ENCODE measurements at regions of chr3 and their contacts with region 1.

Region 1: GRCh38 chr3:56801662-56802377 is at the start of gene ARHGEF3:
- DNase-seq: peak; percentile 85
- H3K4me3 Mint-ChIP-seq: peak within 1 kb of the TSS; percentile 78
- H3K27ac Mint-ChIP-seq: peak within 1 kb of the TSS; percentile 0
- H3K4me1 Mint-ChIP-seq: peaks cover 24% of the 10 kb centered on the region
- H3K27me3 Mint-ChIP-seq: no peaks in the 10 kb centered on the region
- CTCF ChIP-seq: peak; percentile 47
- total RNA-seq, gene ARHGEF3: 10.6 and 13.1 TPM in 2 replicates

Region 2: GRCh38 chr3:56702490-56703315 is 99.1 kb before region 1 on chr3:
- CTCF ChIA-PET with region 1: interaction called, 197 read pairs
- POLR2A ChIA-PET with region 1: interaction called, 22 read pairs
- intact Hi-C with region 1: loop called (anchors 1 kb)
- DNase-seq: peak; percentile 77
- H3K4me3 Mint-ChIP-seq: no peak overlapping the region
- H3K27ac Mint-ChIP-seq: no peak overlapping the region
- H3K4me1 Mint-ChIP-seq: no peaks in the 10 kb centered on the region
- H3K27me3 Mint-ChIP-seq: no peaks in the 10 kb centered on the region
- CTCF ChIP-seq: peak; percentile 75

Region 3: DNA sequence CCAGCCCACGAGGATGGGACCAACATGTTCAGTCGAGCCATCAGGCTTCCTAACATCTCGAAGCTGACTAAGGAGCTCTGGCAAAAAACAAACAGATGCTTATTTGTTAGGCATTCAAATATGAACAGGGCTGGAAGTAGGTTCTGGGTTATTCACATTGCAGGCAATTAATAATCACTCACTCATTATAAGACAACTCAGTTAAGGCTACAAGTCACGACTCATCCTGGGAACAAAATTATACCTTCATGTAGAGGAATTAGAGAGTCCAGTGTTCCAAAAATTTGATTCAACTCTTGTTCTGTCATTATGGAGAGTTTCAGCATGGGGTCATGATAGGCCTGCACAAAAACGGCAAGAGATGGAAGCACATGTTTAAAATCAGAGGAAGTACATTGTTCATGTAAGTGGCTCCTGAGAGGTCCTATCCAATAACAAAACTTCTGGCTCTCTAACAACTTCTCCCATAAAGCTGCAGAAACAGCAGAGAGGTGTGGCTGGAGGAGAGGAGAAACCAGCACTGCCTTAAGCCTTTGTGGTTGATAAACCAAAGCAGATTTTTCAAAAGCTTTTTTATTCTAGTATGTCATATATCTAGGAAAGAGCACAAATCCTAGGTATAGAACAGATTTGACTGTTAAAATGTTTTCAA is 50.6 kb before region 1 on chr3:
- CTCF ChIA-PET with region 1: interaction called, 22 read pairs
- POLR2A ChIA-PET with region 1: interaction called, 10 read pairs
- intact Hi-C with region 1: no loop called
- DNase-seq: no peak
- H3K4me3 Mint-ChIP-seq: no peak overlapping the region
- H3K27ac Mint-ChIP-seq: no peak overlapping the region
- H3K4me1 Mint-ChIP-seq: peaks cover 11% of the 10 kb centered on the region
- H3K27me3 Mint-ChIP-seq: no peaks in the 10 kb centered on the region
- CTCF ChIP-seq: no peak

Region 4: GRCh38 chr3:56812754-56813650 is 11.2 kb after region 1 on chr3:
- CTCF ChIA-PET with region 1: interaction called, 37 read pairs
- POLR2A ChIA-PET with region 1: interaction called, 5 read pairs
- intact Hi-C with region 1: no loop called
- DNase-seq: peak; percentile 54
- H3K4me3 Mint-ChIP-seq: no peak overlapping the region
- H3K27ac Mint-ChIP-seq: peak overlapping the region; percentile 69
- H3K4me1 Mint-ChIP-seq: peaks cover 11% of the 10 kb centered on the region
- H3K27me3 Mint-ChIP-seq: no peaks in the 10 kb centered on the region
- CTCF ChIP-seq: no peak

Region 5: DNA sequence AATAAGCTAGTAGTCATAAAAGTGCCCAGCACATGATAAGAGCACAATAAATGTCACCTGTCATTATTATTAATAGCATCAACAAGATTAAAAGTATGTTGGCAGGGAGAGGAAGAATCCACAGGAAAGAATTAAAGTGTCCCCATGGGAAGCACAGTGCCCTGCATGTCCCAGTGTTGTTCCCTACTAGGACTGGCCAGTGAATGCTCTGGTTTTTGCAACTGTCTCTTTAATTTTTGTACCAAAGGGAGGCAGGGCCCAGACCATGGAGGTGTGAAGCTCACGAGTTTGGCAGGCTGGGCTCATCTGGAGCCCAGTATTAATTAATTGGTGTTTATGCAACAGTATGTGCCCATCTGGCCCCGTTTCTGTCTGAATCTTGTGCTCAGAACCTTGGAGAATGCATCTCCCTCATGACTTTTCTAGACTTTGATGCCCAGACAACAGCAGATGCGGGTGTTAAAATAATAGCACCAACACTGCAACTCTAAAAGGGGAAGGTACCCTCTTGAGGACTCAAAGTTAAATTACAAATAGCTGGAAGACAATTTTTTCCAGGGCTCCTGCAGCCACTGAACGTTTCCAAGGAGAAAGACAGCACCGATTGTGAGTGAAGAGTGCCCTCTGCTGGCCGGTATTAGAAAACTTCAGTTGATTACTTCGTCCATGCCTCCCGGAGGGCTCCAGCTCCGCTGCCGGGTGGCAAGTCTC is 186.8 kb after region 1 on chr3:
- CTCF ChIA-PET with region 1: interaction called, 170 read pairs
- POLR2A ChIA-PET with region 1: interaction called, 27 read pairs
- intact Hi-C with region 1: loop called (anchors 1 kb)
- DNase-seq: peak; percentile 83
- H3K4me3 Mint-ChIP-seq: no peak overlapping the region
- H3K27ac Mint-ChIP-seq: no peak overlapping the region
- H3K4me1 Mint-ChIP-seq: no peaks in the 10 kb centered on the region
- H3K27me3 Mint-ChIP-seq: no peaks in the 10 kb centered on the region
- CTCF ChIP-seq: peak; percentile 81